ENCODE measurements at regions of chr10 and their contacts with region 1.

Region 1: DNA sequence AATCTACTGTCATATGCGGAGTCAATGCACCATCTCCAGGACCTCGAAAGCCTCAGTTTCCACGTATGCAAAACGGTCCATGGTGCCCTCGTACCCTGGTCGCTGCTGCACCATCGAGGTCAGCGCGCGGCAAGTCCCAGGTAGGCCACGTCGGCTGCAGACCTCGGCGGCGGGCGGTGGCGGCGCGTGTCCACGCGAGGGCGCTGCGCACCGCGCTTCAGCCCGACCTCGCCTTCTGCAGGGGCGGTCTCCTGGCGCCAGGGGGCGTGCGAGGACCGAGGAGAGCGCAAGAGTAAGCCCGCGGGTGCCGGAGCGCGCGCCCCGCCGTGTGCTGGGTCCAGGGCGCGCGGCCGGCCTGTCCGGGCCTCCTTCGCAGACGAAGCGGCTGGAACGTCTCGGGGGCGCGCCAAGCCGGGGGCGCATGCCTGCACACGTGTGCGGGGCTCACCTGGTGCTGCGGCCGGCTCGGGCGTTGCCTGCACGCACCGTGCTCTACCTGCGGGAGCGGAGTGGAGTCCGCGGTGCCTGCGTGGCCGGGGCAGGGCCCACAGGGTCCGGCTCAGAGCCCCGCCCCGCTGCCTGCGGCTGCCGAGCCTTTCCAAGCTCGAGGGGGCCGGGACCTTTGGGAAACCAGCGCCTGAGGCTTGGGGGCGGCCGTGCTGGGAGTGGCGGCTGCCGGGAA is 54.0 kb downstream of the GLRX3 start:
- DNase-seq: peak; percentile 84
- H3K4me3 ChIP-seq: peak overlapping the region; percentile 50 to 51
- H3K27ac ChIP-seq: peak overlapping the region; percentile 30 to 32
- H3K4me1 ChIP-seq: peaks cover 2% of the 10 kb centered on the region
- H3K27me3 ChIP-seq: no peaks in the 10 kb centered on the region
- CTCF ChIP-seq: peak; percentile 100
- POLR2A ChIP-seq: no peak

Region 2: DNA sequence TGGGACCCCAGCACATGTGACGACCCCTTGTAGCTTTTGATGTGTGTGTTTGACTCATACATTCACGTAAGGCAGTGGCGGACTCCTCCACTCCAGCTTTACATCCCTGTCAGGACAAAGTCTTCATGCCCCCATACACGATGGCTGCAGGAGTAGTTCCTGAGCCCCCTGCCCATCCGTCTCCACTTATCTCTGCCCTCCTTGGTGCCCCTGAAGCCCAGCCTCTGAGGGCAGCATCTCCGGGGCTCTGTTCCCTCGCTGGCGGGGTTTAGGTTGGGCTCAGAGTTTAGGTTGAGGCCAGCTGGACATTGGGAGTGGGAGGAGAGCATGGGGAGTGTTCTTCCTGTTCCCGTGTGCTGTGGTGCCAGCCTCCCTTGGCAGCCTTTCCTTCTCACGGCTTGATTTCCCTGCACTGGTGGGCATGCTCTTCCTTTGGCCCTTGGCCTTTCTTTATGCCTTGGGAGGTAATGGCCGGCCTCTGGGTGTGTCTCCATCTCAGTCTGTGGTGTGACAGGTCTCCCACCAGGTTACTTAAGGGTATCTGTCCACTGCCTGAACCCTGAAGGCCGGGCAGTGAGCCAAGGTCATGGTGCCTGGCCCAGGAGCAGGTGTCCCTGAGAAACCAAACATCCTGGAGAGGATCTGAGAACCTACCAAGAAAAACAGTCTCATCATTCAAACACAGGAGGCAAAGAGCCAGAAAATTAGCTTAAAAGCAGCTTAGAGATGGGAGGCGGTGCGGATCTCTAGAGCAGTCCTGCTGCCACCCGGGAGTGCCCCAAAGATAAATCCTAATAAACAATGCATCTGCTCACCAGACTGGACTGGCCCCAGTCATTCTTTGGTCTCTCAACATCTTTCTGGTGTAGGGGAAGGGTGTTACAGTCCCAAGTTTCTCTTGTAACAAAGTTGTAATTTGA is 31.5 kb after region 1 on chr10:
- intact Hi-C with region 1: no loop called
- DNase-seq: no peak
- H3K4me3 ChIP-seq: no peak overlapping the region
- H3K27ac ChIP-seq: no peak overlapping the region
- H3K4me1 ChIP-seq: no peaks in the 10 kb centered on the region
- H3K27me3 ChIP-seq: no peaks in the 10 kb centered on the region
- CTCF ChIP-seq: no peak
- POLR2A ChIP-seq: no peak

Region 3: GRCh38 chr10:130857631-130858295 is 667.6 kb after region 1 on chr10:
- intact Hi-C with region 1: no loop called
- DNase-seq: no peak
- H3K4me3 ChIP-seq: no peak overlapping the region
- H3K27ac ChIP-seq: no peak overlapping the region
- H3K4me1 ChIP-seq: no peaks in the 10 kb centered on the region
- H3K27me3 ChIP-seq: no peaks in the 10 kb centered on the region
- CTCF ChIP-seq: no peak
- POLR2A ChIP-seq: no peak

Region 4: DNA sequence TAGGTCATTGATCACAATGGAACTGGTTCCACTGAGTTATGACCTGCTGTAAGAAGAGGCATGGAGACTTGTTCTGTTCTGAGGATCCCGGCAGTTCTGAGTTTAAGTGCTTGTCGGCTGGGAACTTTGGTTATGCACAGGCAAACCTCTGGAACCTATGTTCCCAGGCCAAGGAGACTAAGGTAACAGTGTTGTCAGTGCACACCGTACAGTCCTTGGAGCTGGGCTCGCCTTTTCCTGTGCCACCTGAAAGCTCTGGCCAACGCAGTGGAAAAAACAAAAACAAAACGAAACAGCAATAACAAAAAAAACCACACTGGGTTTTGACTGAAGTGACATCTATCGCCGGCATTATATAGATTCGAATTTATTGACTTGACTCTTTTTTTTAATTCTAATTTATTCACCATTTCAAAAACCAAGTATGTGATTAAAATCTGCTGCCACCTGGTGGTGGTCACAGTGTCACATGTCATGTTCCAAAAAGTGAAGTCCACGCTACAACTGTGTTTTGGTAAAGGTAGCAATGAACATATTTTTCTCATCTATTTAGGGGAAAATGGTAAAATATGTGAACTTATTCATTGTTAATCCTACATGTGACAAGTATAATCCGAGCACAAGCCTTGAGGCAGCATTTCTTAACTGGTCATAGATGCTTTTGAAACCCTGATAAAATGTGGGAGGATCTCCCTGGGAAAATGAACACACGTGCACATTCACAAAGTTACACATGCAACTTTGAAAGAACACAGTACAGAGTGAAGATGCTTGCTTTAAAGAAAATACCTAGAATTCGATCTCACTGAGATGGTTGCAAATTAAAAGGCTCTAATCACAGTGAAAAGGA is 1596.8 kb after region 1 on chr10:
- intact Hi-C with region 1: loop called (anchors 2 kb)
- DNase-seq: peak; percentile 22
- H3K4me3 ChIP-seq: no peak overlapping the region
- H3K27ac ChIP-seq: no peak overlapping the region
- H3K4me1 ChIP-seq: no peaks in the 10 kb centered on the region
- H3K27me3 ChIP-seq: no peaks in the 10 kb centered on the region
- CTCF ChIP-seq: peak; percentile 63 to 81 (median 68)
- POLR2A ChIP-seq: no peak

Region 5: DNA sequence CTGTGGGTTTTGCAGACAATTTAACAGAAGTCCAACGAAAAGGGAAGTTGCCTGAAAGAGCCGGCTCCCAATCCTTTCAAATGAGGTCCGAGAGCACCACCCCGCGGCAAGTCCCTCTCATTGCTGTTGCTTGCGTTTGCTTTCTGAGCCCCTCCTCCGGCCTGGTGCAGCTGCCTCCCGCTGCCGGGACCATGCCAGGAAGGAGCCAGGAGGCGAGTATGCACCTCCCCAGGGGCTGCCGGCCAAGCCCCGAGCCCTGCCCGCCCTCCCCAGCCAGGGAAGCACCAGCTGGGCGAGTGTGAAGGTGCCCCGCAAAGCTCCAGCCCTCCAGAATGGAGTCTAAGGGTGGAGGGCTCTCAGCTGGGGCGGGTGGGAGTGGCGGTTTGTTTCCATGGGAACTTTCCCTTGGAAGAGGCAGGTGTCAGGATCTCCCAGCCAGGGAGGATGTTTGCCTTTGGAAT is 1684.8 kb after region 1 on chr10:
- intact Hi-C with region 1: loop called (anchors 5 kb)
- DNase-seq: peak; percentile 72
- H3K4me3 ChIP-seq: no peak overlapping the region
- H3K27ac ChIP-seq: no peak overlapping the region
- H3K4me1 ChIP-seq: no peaks in the 10 kb centered on the region
- H3K27me3 ChIP-seq: no peaks in the 10 kb centered on the region
- CTCF ChIP-seq: peak; percentile 39 to 75 (median 69)
- POLR2A ChIP-seq: no peak